ENCODE measurements at regions of chr16 and their contacts with region 1.

Region 1: GRCh38 chr16:28063641-28064061 is at the start of gene GSG1L:
- DNase-seq: no peak
- ATAC-seq: no peak
- H3K4me3 ChIP-seq: peak within 1 kb of the TSS in 3 of 4 donors; percentile 4 to 17 (median 10)
- H3K27ac ChIP-seq: no peak within 1 kb of the TSS
- H3K4me1 ChIP-seq: peaks cover 6 to 7% of the 10 kb centered on the region in 2 donors
- H3K27me3 ChIP-seq: peaks cover 27 to 39% (median 29%) of the 10 kb centered on the region in 3 donors
- CTCF ChIP-seq: peak in 1 of 5 experiments; percentile 6
- POLR2A ChIP-seq: no peak
- total RNA-seq, gene GSG1L: not detected

Region 2: DNA sequence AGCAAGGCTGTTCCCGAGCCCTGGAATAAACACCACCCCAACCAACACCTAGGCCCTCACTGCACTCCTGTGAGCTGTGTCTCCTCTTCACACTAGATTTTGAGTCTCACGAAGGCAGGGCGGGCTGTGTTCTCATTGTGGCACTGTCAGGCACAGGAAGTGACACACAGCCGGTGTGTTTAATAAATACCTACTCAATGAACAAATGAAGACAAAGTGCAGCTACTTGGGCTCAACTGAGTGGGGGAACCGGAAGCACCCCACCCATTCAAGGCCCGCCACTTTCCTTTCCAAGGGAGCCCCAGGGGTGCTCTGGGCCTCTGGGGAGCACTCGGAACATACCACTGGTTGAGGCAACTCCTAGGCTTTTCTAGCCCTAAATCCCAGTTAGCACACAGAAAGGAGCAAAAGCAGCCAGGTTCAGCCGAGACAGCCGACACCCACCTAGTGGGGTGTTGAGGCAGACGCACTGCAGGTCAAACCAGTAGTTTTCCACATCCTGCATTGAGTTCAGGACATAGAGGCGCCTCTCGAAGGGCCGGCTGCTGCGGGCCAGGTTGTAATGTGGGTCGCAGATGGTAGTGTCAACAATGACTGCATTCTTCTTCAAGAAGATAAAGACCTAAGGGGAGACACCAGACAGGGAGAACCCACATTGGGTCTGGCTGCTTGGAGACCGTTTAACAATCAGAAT is 571.6 kb before region 1 on chr16:
- in situ Hi-C with region 1: no loop called
- intact Hi-C with region 1: no loop called
- DNase-seq: no peak
- ATAC-seq: peak; percentile 35 to 44
- H3K4me3 ChIP-seq: no peak overlapping the region
- H3K27ac ChIP-seq: peak overlapping the region; percentile 43 to 69 (median 58)
- H3K4me1 ChIP-seq: no peaks in the 10 kb centered on the region
- H3K27me3 ChIP-seq: no peaks in the 10 kb centered on the region
- CTCF ChIP-seq: no peak
- POLR2A ChIP-seq: no peak

Region 3: GRCh38 chr16:27639561-27640276 is 423.9 kb before region 1 on chr16:
- in situ Hi-C with region 1: loop called in 3 of 4 experiments (anchors 25 kb)
- intact Hi-C with region 1: loop called (anchors 2 kb)
- DNase-seq: no peak
- ATAC-seq: no peak
- H3K4me3 ChIP-seq: no peak overlapping the region
- H3K27ac ChIP-seq: no peak overlapping the region
- H3K4me1 ChIP-seq: no peaks in the 10 kb centered on the region
- H3K27me3 ChIP-seq: no peaks in the 10 kb centered on the region
- CTCF ChIP-seq: peak in 4 of 5 experiments; percentile 16 to 45 (median 24)
- POLR2A ChIP-seq: no peak

Region 4: DNA sequence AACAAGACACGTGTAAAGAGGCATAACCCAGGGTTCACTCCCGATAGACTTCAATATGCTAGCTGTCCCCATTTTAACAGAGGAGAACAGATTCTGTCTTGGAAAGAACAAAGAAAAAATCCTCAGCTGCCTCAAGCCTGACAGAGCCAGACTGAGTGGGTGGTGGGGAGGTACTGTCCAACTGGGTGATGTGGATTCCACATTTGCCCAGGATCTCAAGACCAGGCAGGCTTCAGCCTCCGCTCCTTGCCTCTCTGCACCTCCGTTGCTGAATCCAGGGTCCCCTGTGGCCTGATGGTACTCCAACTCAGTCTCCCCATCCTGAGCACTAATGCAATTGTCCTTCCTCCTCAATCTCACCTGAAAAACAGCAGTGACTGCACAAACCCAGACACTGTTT is 163.9 kb before region 1 on chr16:
- in situ Hi-C with region 1: no loop called
- intact Hi-C with region 1: no loop called
- DNase-seq: no peak
- ATAC-seq: no peak
- H3K4me3 ChIP-seq: no peak overlapping the region
- H3K27ac ChIP-seq: no peak overlapping the region
- H3K4me1 ChIP-seq: no peaks in the 10 kb centered on the region
- H3K27me3 ChIP-seq: peaks cover under 1 to 6% (median 4%) of the 10 kb centered on the region in 3 donors
- CTCF ChIP-seq: no peak
- POLR2A ChIP-seq: no peak

Region 5: DNA sequence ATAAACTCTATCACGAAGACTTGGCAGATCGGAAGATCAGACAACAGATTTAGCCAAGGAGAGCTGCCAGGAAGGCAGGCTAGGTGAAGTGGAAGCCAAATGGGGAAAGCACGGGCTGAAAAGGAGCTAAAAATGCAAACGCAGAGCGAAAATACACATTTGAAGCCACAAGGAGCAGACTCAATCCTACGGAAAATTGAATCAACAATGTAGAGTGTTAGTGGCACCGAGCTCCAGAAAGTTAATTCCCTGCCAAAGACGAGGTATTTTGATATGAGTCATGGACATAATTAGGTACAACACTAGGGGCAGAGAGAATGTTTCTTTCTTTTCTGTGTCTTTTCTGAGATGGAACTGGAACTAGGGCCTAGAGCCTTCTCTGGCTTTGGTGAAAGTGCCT is 20.8 kb before region 1 on chr16:
- in situ Hi-C with region 1: no loop called
- intact Hi-C with region 1: loop called (anchors 1 kb)
- DNase-seq: no peak
- ATAC-seq: peak in 1 of 2 donors; percentile 65
- H3K4me3 ChIP-seq: peak overlapping the region in 1 of 4 donors; percentile 13
- H3K27ac ChIP-seq: no peak overlapping the region
- H3K4me1 ChIP-seq: peaks cover 6 to 8% of the 10 kb centered on the region in 2 donors
- H3K27me3 ChIP-seq: no peaks in the 10 kb centered on the region
- CTCF ChIP-seq: no peak
- POLR2A ChIP-seq: no peak

Region 6: GRCh38 chr16:28158136-28158535 is 94.5 kb after region 1 on chr16:
- in situ Hi-C with region 1: no loop called
- intact Hi-C with region 1: no loop called
- DNase-seq: no peak
- ATAC-seq: peak in 1 of 2 donors; percentile 74
- H3K4me3 ChIP-seq: no peak overlapping the region
- H3K27ac ChIP-seq: peak overlapping the region in 1 of 4 donors; percentile 28
- H3K4me1 ChIP-seq: no peaks in the 10 kb centered on the region
- H3K27me3 ChIP-seq: no peaks in the 10 kb centered on the region
- CTCF ChIP-seq: no peak
- POLR2A ChIP-seq: no peak

Region 7: DNA sequence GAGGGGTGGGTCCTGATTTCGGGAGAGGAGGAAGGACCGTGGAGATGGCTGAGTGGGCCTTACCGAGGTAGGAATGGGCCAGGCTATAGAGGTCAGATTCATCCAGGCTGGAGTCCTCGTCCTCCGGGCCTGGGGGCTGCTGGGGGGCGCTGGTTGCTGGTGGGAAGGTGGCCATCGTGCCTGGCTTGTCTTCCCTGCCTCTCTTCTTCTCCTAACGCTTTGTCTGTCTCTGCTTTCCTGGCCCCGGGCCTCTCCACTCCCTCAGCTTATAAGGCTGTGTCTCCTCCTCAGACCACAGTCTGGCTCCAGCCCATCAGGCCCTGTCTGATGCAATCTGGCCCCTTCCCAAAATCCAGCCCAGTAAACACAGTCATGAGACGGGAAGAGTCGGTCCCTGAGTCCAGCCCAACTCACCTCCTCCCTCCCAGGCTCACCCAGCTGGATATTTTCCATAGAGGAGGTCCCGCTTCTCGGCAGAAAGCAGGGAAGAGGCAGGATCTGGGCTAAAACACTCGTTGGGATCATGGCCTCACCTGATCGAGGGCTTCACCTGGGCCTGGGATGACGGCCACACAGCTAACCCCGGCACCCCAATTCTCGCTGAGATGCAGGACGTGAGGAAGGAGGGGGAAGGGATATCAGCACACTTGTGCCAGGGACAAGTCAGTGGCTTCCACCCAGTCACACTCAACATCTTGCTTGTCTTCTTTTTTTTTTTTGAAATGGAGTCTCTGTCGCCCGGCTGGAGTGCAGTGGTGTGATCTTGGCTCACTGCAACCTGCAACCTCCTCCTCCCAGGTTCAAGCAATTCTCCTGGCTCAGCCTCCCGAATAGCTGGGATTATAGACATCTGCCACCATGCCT is 475.3 kb after region 1 on chr16 and contains the start of gene NUPR1:
- in situ Hi-C with region 1: no loop called
- intact Hi-C with region 1: no loop called
- DNase-seq: peak; percentile 98 to 99
- ATAC-seq: peak; percentile 84 to 85
- H3K4me3 ChIP-seq: peak within 1 kb of the TSS; percentile 66 to 79 (median 68)
- H3K27ac ChIP-seq: peak within 1 kb of the TSS; percentile 98 to 99 (median 99)
- H3K4me1 ChIP-seq: peaks cover 22 to 35% of the 10 kb centered on the region in 2 donors
- H3K27me3 ChIP-seq: no peaks in the 10 kb centered on the region
- CTCF ChIP-seq: no peak
- POLR2A ChIP-seq: peak; percentile 91 to 96
- total RNA-seq, gene NUPR1: 18.7 to 44.3 (median 22.6) TPM